ENCODE measurements at regions of chr14 and their contacts with region 1.

Region 1: DNA sequence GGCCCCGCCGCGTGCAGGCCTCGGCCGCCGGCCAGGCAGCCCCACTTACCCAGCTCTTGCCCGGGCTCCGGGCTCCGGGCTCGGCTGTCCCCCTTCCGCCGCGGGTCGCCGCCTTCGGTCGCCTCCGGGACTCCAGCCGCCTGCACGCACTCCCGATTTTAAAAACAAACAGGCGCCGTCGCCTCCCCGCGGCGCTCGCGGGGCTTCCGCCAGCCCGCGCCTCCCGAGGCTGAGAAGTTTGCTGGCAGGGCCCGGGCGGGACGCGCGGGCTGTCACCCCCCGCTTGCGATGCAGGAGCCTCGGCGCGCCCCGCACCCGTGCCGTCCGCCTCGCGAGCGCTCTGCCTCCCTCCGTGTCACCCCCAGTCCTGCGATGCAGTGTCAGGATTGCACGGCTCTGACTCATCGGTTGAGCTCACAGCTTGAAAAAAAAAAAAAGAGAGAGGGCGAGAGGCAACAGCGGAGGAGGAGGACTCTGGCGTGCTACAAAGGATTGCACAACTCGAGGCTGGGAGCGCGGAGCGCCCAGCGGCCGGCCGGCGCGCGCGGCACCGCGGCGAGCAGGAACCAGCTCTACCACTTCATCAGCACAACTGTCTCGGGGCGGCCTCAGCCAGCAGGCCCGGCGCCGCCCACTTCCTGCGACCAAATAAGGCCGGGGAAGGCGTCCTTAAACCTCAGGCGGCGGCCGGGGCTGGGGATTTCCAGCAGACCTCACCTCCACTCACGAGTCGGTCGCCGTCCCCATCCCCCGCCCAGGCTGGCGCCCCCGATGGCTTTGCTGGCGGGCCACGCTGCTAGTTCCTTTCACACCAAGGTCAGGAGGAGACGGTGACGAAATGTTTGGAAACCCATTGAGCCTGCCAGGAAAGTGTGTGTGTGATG is 45.8 kb upstream of the PNMA1 start:
- DNase-seq: peak; percentile 95
- ATAC-seq: peak; percentile 80
- H3K4me3 Mint-ChIP-seq: peak overlapping the region; percentile 87
- H3K27ac Mint-ChIP-seq: peak overlapping the region; percentile 94
- H3K4me1 Mint-ChIP-seq: peaks cover 67% of the 10 kb centered on the region
- H3K27me3 Mint-ChIP-seq: no peaks in the 10 kb centered on the region

Region 2: DNA sequence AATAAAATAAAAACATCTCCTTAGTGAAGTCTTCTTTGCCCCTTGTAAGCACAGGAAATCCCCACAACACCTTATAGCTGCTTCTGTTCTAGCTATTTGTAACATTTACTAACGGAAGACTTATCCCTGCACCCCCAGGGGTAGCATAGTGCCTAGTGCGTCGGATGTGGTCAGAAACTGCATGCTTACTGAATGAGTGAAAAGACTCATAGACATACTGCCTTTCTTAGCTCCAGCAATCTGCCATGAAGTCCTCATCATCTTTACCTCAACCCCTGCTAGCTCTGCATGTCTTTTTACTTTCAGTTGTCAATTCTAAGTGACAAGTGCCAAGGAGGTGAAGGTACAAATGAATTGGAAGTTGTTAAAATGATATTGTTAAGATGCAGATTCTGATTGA is 256.3 kb before region 1 on chr14:
- POLR2A ChIA-PET with region 1: no interaction called
- DNase-seq: no peak
- ATAC-seq: no peak
- H3K4me3 Mint-ChIP-seq: no peak overlapping the region
- H3K27ac Mint-ChIP-seq: no peak overlapping the region
- H3K4me1 Mint-ChIP-seq: no peaks in the 10 kb centered on the region
- H3K27me3 Mint-ChIP-seq: no peaks in the 10 kb centered on the region

Region 3: GRCh38 chr14:73728717-73729330 is 31.1 kb before region 1 on chr14:
- POLR2A ChIA-PET with region 1: interaction called, 33 read pairs
- DNase-seq: peak; percentile 87
- ATAC-seq: peak; percentile 83
- H3K4me3 Mint-ChIP-seq: peak overlapping the region; percentile 19
- H3K27ac Mint-ChIP-seq: peak overlapping the region; percentile 77
- H3K4me1 Mint-ChIP-seq: peaks cover 21% of the 10 kb centered on the region
- H3K27me3 Mint-ChIP-seq: no peaks in the 10 kb centered on the region

Region 4: GRCh38 chr14:73771848-73772638 is 12.1 kb after region 1 on chr14:
- POLR2A ChIA-PET with region 1: interaction called, 174 read pairs
- DNase-seq: peak; percentile 65
- ATAC-seq: peak; percentile 85
- H3K4me3 Mint-ChIP-seq: peak overlapping the region; percentile 62
- H3K27ac Mint-ChIP-seq: peak overlapping the region; percentile 84
- H3K4me1 Mint-ChIP-seq: peaks cover 50% of the 10 kb centered on the region
- H3K27me3 Mint-ChIP-seq: no peaks in the 10 kb centered on the region

Region 5: GRCh38 chr14:73851644-73852382 is 91.9 kb after region 1 on chr14 and contains the start of gene PTGR2:
- POLR2A ChIA-PET with region 1: interaction called, 11 read pairs
- DNase-seq: peak; percentile 87
- ATAC-seq: peak; percentile 98
- H3K4me3 Mint-ChIP-seq: peak within 1 kb of the TSS; percentile 91
- H3K27ac Mint-ChIP-seq: peak within 1 kb of the TSS; percentile 94
- H3K4me1 Mint-ChIP-seq: peaks cover 13% of the 10 kb centered on the region
- H3K27me3 Mint-ChIP-seq: peaks cover 2% of the 10 kb centered on the region
- total RNA-seq, gene PTGR2: 3.4 to 3.6 TPM

Region 6: GRCh38 chr14:74333909-74334308 is 574.0 kb after region 1 on chr14:
- POLR2A ChIA-PET with region 1: no interaction called
- DNase-seq: no peak
- ATAC-seq: no peak
- H3K4me3 Mint-ChIP-seq: no peak overlapping the region
- H3K27ac Mint-ChIP-seq: no peak overlapping the region
- H3K4me1 Mint-ChIP-seq: no peaks in the 10 kb centered on the region
- H3K27me3 Mint-ChIP-seq: peaks cover 17% of the 10 kb centered on the region

Measured in activated naive CD8-positive, alpha-beta T cell treated with anti-CD3 and anti-CD28 coated beads, Interleukin-2, amount 10 ng/mL, durations not matched to agents 7 days and 5 days (primary cell).